T-cell (primary cell): ENCODE measurements at regions of chr3 and their contacts with region 1.

Region 1: DNA sequence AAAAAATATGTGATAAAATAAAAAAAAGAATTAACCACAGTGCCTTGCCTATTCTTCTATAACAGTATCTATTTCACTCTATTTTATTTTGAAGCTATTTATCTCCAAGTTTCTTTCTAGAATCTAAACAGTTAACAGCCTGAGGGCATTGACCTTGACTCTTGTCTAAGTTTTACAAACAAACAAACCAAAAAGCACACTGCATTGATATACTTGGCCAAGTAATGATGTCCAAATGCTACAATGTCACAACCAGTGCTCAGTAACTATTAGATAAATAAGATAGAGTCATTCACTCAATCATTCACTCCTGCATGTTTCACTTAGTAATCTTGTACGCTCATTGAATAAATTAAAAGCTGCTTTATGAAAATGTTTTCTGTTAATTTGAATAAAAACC is 386.5 kb downstream of the TIGIT start:
- DNase-seq: no peak
- ATAC-seq: no peak
- H3K4me3 ChIP-seq: no peak overlapping the region
- H3K4me3 Mint-ChIP-seq: no peak overlapping the region
- H3K27ac ChIP-seq: no peak overlapping the region
- H3K27ac Mint-ChIP-seq: no peak overlapping the region
- H3K4me1 ChIP-seq: no peaks in the 10 kb centered on the region
- H3K4me1 Mint-ChIP-seq: peaks cover 0 to 1% (median 0%) of the 10 kb centered on the region in 3 donors
- H3K27me3 ChIP-seq: no peaks in the 10 kb centered on the region
- H3K27me3 Mint-ChIP-seq: no peaks in the 10 kb centered on the region

Region 2: GRCh38 chr3:114480442-114480841 is 199.9 kb before region 1 on chr3:
- CTCF ChIA-PET with region 1: no interaction called
- POLR2A ChIA-PET with region 1: interaction called in 1 of 2 experiments, 11 read pairs
- DNase-seq: no peak
- ATAC-seq: no peak
- H3K4me3 ChIP-seq: no peak overlapping the region
- H3K4me3 Mint-ChIP-seq: no peak overlapping the region
- H3K27ac ChIP-seq: no peak overlapping the region
- H3K27ac Mint-ChIP-seq: no peak overlapping the region
- H3K4me1 ChIP-seq: peaks cover 6 to 8% of the 10 kb centered on the region in 2 experiments
- H3K4me1 Mint-ChIP-seq: peaks cover 20 to 25% (median 24%) of the 10 kb centered on the region in 3 donors
- H3K27me3 ChIP-seq: no peaks in the 10 kb centered on the region
- H3K27me3 Mint-ChIP-seq: no peaks in the 10 kb centered on the region

Region 3: DNA sequence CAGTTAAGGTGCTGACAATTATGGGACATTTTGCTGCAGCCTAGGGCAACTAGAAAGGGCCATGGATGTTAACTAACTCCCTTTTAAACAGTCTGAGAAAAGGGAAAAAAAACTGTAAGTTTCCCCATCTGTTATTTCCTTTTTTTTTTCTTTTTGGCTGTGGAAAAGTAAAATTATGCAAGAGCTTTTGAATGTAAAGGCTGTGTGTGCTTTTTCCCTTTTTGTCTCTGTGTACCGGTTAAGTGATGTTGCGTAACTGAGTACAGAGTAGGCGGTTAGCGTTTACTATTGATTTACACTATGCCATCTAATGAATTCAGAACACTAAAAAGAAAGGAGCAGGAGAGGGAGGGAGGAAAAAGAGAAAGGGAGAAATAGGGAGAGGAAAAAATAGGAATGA is 17.1 kb after region 1 on chr3:
- CTCF ChIA-PET with region 1: no interaction called
- POLR2A ChIA-PET with region 1: interaction called in 1 of 2 experiments, 10 read pairs
- DNase-seq: no peak
- ATAC-seq: no peak
- H3K4me3 ChIP-seq: no peak overlapping the region
- H3K4me3 Mint-ChIP-seq: no peak overlapping the region
- H3K27ac ChIP-seq: no peak overlapping the region
- H3K27ac Mint-ChIP-seq: no peak overlapping the region
- H3K4me1 ChIP-seq: no peaks in the 10 kb centered on the region
- H3K4me1 Mint-ChIP-seq: peaks cover 10 to 17% (median 17%) of the 10 kb centered on the region in 3 donors
- H3K27me3 ChIP-seq: no peaks in the 10 kb centered on the region
- H3K27me3 Mint-ChIP-seq: no peaks in the 10 kb centered on the region